ENCODE measurements at regions of chrX and their contacts with region 1.

Region 1: GRCh38 chrX:87338510-87338909 is 179.1 kb upstream of the KLHL4 start:
- DNase-seq: peak; percentile 49
- H3K4me3 Mint-ChIP-seq: no peak overlapping the region
- H3K27ac Mint-ChIP-seq: no peak overlapping the region
- H3K4me1 Mint-ChIP-seq: no peaks in the 10 kb centered on the region
- H3K27me3 Mint-ChIP-seq: peaks cover 17% of the 10 kb centered on the region
- CTCF ChIP-seq: peak; percentile 40

Region 2: DNA sequence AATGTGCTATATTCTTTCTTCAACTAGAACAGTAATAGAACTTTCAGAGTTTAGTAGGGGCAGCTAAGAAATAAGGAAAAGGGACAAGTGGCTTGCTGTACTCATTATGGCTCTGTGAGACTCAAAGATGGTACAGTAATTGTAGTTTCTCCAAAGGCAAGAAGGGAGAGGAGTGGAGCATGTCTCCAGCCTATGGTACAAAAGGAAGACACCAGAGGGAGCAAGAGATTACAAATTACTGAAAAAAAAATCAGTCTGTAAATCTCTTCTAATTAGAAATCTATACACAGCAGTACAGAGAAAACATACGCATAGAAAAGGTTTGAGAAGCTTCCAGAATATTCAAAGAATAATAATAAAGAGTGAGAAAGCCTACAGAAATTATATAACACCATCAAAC is 240.5 kb after region 1 on chrX:
- CTCF ChIA-PET with region 1: interaction called, 3 read pairs
- POLR2A ChIA-PET with region 1: no interaction called
- intact Hi-C with region 1: loop called (anchors 2 kb)
- DNase-seq: no peak
- H3K4me3 Mint-ChIP-seq: no peak overlapping the region
- H3K27ac Mint-ChIP-seq: no peak overlapping the region
- H3K4me1 Mint-ChIP-seq: no peaks in the 10 kb centered on the region
- H3K27me3 Mint-ChIP-seq: peaks cover 18% of the 10 kb centered on the region
- CTCF ChIP-seq: no peak

Measured in MCF 10A (cell line).